ENCODE measurements at regions of chr3 and their contacts with region 1.

Region 1: DNA sequence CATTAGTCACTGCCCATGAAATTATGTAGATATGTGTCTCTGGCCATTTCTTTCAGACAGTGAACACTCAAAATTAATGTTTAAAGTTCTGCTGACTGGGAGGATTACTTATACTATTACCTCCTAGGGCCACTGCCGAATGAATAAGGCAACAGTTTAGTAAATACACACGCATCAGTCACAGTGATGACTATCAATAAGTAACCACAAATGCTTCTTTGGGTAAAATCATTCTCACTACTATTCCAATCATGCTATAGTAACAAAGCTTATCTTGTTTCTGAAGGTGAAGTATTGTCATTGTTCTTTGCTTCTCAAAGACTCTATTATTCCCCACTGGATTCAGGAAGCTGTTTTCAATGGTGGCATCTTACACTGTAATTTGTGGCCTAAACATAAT is 478.8 kb downstream of the EPHA3 start:
- DNase-seq: no peak
- ATAC-seq: no peak
- H3K4me3 ChIP-seq: no peak overlapping the region
- H3K27ac ChIP-seq: no peak overlapping the region
- H3K4me1 ChIP-seq: no peaks in the 10 kb centered on the region
- H3K27me3 ChIP-seq: no peaks in the 10 kb centered on the region
- CTCF ChIP-seq: no peak
- POLR2A ChIP-seq: no peak

Region 2: DNA sequence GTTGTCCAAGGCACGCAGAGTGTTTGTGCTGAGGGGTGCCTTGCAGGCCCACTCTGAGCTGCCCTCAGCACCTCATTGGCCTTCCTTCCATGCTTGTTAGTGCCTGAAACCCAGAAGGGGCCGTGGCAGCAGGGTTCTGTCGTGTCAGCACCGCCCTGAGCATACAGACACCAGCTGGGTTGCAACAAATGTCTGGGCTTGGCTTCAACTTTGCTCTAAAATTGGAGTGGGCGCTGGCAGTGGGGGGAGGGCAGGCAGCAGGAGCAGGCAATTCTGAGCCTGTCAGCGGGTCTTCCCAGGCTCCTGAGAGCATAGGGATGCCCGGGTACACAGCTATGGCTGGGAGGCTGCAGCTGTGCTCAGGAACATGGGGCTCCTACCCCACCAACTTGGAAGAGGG is 14.5 kb before region 1 on chr3:
- intact Hi-C with region 1: loop called in 1 of 10 experiments (anchors 2 kb)
- DNase-seq: peak; percentile 37 to 60 (median 51)
- ATAC-seq: peak; percentile 75 to 94 (median 88)
- H3K4me3 ChIP-seq: peak overlapping the region in 2 of 12 donors; percentile 2 to 12
- H3K27ac ChIP-seq: peak overlapping the region in 4 of 12 donors; percentile 20 to 74 (median 34)
- H3K4me1 ChIP-seq: peaks cover 0 to 16% (median 0%) of the 10 kb centered on the region in 12 donors
- H3K27me3 ChIP-seq: no peaks in the 10 kb centered on the region
- CTCF ChIP-seq: no peak
- POLR2A ChIP-seq: no peak

Region 3: DNA sequence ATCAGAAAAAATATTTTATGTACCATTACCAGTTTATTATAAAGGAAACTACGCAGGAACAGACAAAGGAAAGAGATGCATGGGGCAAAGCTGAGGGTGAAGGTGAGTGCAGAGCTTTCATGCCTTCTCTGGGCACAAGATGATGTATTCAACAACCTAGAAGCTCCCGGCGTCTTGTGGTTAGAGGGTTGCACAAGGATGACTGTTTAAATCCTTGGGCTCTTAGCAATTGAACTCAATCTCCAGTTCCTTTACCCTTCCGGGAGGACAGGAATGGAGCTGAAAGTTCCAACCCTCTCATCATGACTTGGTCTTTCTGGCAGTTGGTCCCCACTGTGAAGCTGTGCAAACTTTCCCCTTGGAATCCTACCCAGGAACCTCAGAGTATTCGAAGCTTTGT is 63.2 kb after region 1 on chr3:
- intact Hi-C with region 1: no loop called
- DNase-seq: no peak
- ATAC-seq: no peak
- H3K4me3 ChIP-seq: no peak overlapping the region
- H3K27ac ChIP-seq: no peak overlapping the region
- H3K4me1 ChIP-seq: no peaks in the 10 kb centered on the region
- H3K27me3 ChIP-seq: no peaks in the 10 kb centered on the region
- CTCF ChIP-seq: no peak
- POLR2A ChIP-seq: no peak

Measured in heart left ventricle (tissue), 16 donors.